ENCODE measurements at regions of chr12 and their contacts with region 1.

Region 1: DNA sequence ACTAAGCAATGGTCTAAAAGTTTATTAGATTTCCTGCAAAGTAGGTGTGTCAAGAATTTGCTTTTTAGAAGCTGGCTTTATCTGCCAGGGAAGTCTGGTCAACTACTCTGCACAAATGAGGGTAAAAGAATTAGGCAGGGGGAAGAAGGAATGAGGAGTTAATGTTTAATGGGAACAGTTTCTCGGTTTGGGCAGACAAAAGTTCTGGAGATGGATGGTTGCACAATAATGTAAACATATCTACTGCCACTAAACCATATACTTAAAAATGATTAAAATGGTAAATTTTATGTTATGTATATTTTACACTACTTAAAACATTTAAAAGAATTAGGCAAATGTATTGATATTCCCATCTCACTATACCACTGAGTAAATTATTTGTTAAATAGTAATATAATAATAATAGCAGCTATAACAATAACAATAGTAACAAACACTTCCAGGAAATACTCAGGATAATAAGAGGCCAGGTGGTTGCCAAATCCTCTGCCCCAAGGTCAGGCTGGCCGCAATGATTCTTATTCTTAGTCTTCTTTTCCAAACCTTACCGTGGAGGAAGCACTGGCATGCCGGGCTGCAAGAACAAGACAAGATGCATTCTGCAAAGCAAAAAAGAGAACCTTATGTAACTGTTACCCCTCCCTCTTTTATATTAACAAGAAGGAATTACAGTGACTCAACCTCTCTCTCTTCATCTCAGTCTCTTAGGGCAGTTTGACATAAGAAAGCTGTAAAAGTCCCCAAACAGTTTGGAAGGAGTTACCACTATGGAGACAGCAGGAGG is 13.9 kb downstream of the CS start:
- DNase-seq: no peak
- ATAC-seq: no peak
- H3K4me3 ChIP-seq: no peak overlapping the region
- H3K27ac ChIP-seq: no peak overlapping the region
- H3K4me1 ChIP-seq: no peaks in the 10 kb centered on the region
- H3K27me3 ChIP-seq: no peaks in the 10 kb centered on the region
- CTCF ChIP-seq: no peak

Region 2: DNA sequence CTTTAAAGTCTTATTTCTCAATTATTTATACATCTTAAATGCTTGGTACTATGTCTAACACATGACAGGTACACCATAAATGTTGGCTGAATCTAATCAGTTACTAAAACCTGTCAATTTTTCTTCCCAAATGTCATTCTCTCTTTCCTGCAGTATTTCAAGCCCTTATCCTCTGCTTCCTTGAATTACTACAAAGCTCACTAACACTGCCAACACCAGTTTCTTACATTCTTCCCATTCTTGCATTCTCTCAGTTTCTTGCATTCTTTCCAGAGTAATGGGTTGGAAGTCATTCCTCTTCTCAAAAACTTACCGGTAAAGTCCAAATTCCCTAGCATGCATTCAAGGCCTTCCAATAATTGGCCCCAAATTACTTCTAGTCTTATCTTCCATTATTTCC is 87.4 kb before region 1 on chr12:
- CTCF ChIA-PET with region 1: no interaction called
- POLR2A ChIA-PET with region 1: interaction called, 18 read pairs
- in situ Hi-C with region 1: no loop called
- intact Hi-C with region 1: no loop called
- DNase-seq: no peak
- ATAC-seq: no peak
- H3K4me3 ChIP-seq: no peak overlapping the region
- H3K27ac ChIP-seq: no peak overlapping the region
- H3K4me1 ChIP-seq: peaks cover 3% of the 10 kb centered on the region; the same call in 1 of the 2 replicates
- H3K27me3 ChIP-seq: no peaks in the 10 kb centered on the region
- CTCF ChIP-seq: no peak

Region 3: GRCh38 chr12:56243731-56244181 is 42.5 kb before region 1 on chr12:
- CTCF ChIA-PET with region 1: no interaction called
- POLR2A ChIA-PET with region 1: no interaction called
- in situ Hi-C with region 1: no loop called
- intact Hi-C with region 1: no loop called
- DNase-seq: no peak
- ATAC-seq: no peak
- H3K4me3 ChIP-seq: no peak overlapping the region
- H3K27ac ChIP-seq: no peak overlapping the region
- H3K4me1 ChIP-seq: no peaks in the 10 kb centered on the region
- H3K27me3 ChIP-seq: no peaks in the 10 kb centered on the region
- CTCF ChIP-seq: no peak

Region 4: DNA sequence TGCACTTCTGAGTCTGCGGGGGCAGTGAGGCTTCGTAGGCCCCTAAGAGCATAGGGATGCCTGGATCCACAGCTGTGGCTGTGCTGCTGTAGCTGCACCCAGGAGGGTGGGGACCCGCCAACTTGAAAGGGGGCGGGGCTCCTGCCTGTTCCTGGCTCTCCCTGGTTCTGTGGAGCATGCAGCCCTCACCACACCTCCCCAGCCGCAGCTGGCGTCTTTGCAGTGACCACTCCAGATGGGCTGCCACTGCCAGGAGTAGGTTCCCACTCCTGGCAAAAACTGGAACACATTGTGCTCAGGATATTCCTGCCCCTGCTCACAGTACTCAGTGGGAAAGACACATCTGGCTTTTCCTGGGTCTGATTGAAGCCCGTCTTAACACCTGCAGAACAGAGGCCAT is 127.2 kb after region 1 on chr12:
- CTCF ChIA-PET with region 1: interaction called, 10 read pairs
- POLR2A ChIA-PET with region 1: no interaction called
- in situ Hi-C with region 1: no loop called
- intact Hi-C with region 1: no loop called
- DNase-seq: no peak
- ATAC-seq: peak; percentile 49; the same call in 1 of the 2 replicates
- H3K4me3 ChIP-seq: no peak overlapping the region
- H3K27ac ChIP-seq: no peak overlapping the region
- H3K4me1 ChIP-seq: no peaks in the 10 kb centered on the region
- H3K27me3 ChIP-seq: no peaks in the 10 kb centered on the region
- CTCF ChIP-seq: no peak

Measured in Panc1 (cell line).